ENCODE measurements at regions of chr4 and their contacts with region 1.

Region 1: DNA sequence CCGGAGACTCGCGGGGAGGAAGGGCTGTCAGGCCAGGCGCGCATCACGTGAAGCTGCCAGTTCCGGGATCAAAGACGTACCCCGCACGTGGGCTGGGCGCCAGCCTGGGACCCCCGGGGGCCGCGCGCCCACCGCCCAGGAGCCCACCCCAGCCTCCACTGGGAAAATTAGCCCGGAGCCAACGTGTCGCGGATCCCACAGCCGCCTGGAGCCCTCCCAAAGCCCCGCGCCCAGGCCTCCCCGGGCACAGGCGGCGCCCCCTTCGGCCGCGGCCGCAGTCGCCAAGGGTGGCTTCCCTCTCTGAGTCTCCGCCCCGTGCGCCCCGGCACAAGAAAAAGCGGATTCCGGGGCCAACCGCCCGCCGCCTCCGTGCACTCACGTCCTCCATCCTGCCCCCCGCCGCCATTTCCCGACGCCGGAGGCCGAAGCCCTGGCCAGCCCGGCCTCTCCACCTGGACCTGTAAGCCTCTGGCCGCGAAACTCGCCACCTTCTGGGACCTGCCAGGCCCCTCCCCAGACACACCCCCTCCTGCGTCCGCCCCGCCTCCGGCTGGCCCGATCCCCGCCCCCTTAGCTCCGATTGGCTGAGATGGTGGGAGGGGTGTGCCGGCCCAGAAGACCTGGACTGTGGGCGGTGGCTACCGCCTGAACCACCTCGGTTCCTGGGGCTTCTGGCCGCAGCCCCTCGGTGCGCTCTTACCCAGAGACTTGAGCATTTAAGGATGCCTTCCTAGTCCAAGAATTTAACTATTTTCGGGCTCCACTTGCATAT is at the start of gene TMEM192:
- DNase-seq: peak; percentile 97
- H3K4me3 ChIP-seq: peak within 1 kb of the TSS; percentile 85 to 95 (median 87)
- H3K27ac ChIP-seq: peak within 1 kb of the TSS; percentile 60
- H3K4me1 ChIP-seq: peaks cover 8% of the 10 kb centered on the region
- H3K27me3 ChIP-seq: no peaks in the 10 kb centered on the region
- CTCF ChIP-seq: peak; percentile 33 to 58
- POLR2A ChIP-seq: peak; percentile 57
- total RNA-seq, gene TMEM192: 13.0 and 14.5 TPM in 2 replicates

Region 2: DNA sequence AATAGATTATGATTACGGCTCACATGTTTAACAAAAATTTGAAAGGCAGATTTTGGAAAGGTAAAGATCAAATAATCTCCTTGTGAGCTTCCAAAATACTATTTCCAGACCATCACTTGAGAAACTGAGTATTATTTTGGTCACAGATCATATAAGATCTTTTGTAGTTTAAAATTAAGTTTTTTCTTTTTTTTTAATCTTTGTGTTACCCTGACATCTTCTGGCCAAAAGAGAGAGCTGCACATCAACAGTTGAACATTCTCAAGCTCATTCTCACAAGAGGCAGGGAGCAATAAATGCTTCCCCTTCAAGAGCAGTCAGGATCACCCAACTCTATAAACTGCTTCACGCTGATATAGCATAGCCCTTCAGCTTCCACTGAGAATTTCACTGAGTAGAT is 15.8 kb before region 1 on chr4:
- CTCF ChIA-PET with region 1: interaction called, 22 read pairs
- POLR2A ChIA-PET with region 1: interaction called, 3 read pairs
- dilution Hi-C with region 1: no loop called
- intact Hi-C with region 1: no loop called
- DNase-seq: peak; percentile 20
- H3K4me3 ChIP-seq: no peak overlapping the region
- H3K27ac ChIP-seq: no peak overlapping the region
- H3K4me1 ChIP-seq: no peaks in the 10 kb centered on the region
- H3K27me3 ChIP-seq: no peaks in the 10 kb centered on the region
- CTCF ChIP-seq: peak; percentile 28 to 37
- POLR2A ChIP-seq: no peak

Region 3: GRCh38 chr4:165327211-165328100 is 214.9 kb after region 1 on chr4 and contains the start of gene MSMO1:
- CTCF ChIA-PET with region 1: interaction called, 17 read pairs
- POLR2A ChIA-PET with region 1: interaction called, 5 read pairs
- dilution Hi-C with region 1: no loop called
- intact Hi-C with region 1: loop called (anchors 1 kb)
- DNase-seq: peak; percentile 100
- H3K4me3 ChIP-seq: peak within 1 kb of the TSS; percentile 80 to 98 (median 96)
- H3K27ac ChIP-seq: peak within 1 kb of the TSS; percentile 64
- H3K4me1 ChIP-seq: peaks cover 58% of the 10 kb centered on the region
- H3K27me3 ChIP-seq: no peaks in the 10 kb centered on the region
- CTCF ChIP-seq: no peak
- POLR2A ChIP-seq: no peak
- total RNA-seq, gene MSMO1: 109 and 127 TPM in 2 replicates

Region 4: DNA sequence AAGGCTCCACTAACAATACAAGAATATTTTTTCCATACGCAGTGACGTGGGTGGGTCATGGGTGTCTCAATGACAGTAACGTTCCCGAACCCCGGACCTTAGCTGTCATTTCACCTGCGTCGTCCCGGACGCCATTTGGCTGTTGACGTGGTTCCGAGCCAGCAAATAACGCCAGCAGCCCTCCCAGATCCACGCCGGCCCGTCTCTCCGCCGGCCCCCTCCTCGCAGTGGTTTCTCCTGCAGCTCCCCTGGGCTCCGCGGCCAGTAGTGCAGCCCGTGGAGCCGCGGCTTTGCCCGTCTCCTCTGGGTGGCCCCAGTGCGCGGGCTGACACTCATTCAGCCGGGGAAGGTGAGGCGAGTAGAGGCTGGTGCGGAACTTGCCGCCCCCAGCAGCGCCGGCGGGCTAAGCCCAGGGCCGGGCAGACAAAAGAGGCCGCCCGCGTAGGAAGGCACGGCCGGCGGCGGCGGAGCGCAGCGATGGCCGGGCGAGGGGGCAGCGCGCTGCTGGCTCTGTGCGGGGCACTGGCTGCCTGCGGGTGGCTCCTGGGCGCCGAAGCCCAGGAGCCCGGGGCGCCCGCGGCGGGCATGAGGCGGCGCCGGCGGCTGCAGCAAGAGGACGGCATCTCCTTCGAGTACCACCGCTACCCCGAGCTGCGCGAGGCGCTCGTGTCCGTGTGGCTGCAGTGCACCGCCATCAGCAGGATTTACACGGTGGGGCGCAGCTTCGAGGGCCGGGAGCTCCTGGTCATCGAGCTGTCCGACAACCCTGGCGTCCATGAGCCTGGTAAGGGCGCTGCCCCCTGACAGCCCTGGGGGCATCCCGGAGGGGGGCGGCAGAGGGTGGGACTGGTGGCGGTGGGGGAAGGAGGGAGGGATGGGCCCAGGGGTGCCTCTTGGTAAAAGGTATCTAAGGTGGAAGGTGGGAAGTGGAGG is 266.5 kb after region 1 on chr4 and contains the start of gene CPE:
- CTCF ChIA-PET with region 1: interaction called, 5 read pairs
- POLR2A ChIA-PET with region 1: no interaction called
- dilution Hi-C with region 1: no loop called
- intact Hi-C with region 1: loop called (anchors 1 kb)
- DNase-seq: peak; percentile 80
- H3K4me3 ChIP-seq: peak within 1 kb of the TSS; percentile 30 to 70 (median 49)
- H3K27ac ChIP-seq: no peak within 1 kb of the TSS
- H3K4me1 ChIP-seq: peaks cover 4% of the 10 kb centered on the region
- H3K27me3 ChIP-seq: peaks cover 2 to 4% of the 10 kb centered on the region in 2 experiments
- CTCF ChIP-seq: peak; percentile 37 to 89
- POLR2A ChIP-seq: no peak
- total RNA-seq, gene CPE: 8.1 and 9.2 TPM in 2 replicates